OCI-LY7 (cell line): ENCODE measurements at regions of chr6 and their contacts with region 1.

Region 1: DNA sequence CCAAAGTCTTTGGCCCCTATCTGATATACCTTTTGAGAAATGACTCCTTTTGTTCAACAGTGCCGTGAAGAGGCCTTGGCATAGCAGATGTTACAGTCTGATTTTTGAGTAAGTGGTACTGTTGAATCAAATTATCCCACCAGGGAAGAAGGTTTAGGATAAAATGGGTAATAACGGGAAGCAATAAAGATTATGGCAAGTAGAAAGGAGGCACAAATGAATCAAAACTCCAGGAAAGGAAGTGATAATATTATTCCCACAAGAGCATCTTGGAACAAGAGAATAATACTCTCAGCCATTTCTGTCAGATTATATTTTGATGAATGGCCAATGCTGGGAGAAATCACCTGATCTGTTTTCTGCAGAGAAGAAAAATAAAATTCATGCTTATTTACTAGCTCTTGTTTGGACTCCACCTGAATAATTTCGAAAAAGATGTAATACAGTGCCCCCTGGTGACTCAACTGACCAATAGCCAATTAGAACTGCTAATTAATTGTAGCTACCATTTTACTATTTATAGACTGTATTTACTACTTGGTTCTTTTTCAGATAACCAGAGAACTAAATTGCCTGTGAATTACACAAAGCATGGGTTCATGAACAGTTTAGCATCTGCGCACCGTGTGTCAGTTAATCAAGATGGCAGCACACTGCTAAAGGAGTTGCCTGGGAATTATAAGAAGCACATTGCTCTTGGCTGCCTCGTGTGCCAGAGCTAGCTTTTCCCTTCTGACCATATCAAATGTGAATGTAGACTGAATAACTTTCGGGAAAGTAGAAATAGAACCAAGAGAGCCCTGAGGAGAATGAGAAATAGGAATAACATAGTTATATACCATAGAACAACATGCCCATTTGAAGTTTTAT is 78.5 kb upstream of the TRDN start:
- DNase-seq: peak; percentile 24
- H3K4me3 ChIP-seq: no peak overlapping the region
- H3K27ac ChIP-seq: no peak overlapping the region
- H3K4me1 ChIP-seq: no peaks in the 10 kb centered on the region
- CTCF ChIP-seq: peak; percentile 83

Region 2: DNA sequence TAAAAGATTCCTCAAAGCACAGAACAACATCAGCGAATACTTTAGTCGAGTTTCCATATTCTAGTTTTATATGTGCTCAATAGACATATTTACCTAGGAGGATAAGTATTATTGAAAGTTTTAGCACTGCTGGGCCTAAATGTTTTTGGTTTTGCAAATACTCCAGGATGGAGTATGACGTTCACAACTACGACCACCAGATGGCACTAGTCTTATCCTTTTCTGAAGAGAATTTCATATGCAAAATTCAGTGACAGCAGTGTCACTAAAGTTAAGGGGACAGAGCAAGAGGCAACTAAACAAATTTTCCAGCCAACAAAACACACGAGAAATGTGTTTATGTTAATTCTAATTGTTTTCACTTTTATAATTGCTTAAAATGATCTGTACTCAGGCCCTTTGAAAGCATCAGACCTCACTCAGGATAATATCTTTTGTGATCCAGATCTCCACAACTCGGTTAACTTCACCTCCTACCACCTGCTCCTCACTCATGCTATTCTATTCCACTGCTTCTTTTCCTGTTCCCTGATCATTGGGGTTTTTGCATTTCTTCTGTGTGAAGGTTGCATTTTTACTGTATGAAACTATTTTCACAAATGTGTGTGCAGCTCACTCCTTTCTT is 299.3 kb before region 1 on chr6:
- CTCF ChIA-PET with region 1: no interaction called
- POLR2A ChIA-PET with region 1: no interaction called
- intact Hi-C with region 1: loop called (anchors 2 kb)
- DNase-seq: peak; percentile 65
- H3K4me3 ChIP-seq: no peak overlapping the region
- H3K27ac ChIP-seq: no peak overlapping the region
- H3K4me1 ChIP-seq: no peaks in the 10 kb centered on the region
- CTCF ChIP-seq: peak; percentile 88